Left ventricle myocardium superior (tissue), 1 donor: ENCODE measurements at regions of chr11 and their contacts with region 1.

Region 1: DNA sequence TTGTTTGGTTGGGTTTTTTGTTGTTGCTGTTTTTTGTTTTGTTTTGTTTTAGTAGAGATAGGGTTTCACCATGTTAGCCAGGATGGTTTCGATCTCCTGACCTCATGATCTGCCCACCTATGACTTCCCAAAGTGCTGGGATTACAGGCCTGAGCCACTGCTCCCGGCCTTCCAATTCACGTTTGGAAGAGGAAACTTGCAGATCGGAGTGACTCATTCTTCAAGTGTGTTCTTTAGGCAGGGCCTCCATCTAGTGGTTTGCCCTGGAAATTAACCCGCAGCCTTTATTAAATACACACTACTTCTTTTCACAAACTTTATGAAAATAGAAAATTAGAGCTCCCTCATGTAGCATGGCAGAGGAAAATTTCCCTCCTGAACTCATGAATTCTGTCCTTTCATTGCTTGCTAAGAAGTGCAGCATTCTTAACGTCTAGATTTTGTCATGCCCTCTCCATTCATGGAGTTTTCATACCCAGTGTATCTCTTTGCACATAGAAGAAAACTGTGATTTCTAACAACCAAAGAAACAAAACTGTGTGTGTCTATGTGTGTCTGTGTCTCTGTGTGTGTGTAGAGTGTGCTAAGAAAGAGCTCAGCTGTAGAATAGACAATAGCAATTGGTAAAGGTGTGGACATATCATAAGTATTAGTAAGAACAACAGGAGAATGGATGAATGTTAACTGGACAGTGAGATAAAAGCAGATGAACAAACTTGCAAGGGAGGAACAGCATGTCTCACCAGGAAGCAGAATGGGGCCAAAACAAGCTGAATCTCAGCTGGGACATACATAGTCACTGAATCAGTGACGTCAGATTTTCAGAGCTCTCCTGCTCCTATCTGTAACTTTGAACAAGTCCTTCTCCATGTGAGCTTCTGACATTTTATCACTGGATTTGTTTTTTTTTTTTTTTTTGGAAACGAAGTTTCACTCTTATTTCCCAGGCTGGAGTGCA is 118.4 kb downstream of the BBOX1 start:
- DNase-seq: no peak
- ATAC-seq: peak; percentile 86

Region 2: DNA sequence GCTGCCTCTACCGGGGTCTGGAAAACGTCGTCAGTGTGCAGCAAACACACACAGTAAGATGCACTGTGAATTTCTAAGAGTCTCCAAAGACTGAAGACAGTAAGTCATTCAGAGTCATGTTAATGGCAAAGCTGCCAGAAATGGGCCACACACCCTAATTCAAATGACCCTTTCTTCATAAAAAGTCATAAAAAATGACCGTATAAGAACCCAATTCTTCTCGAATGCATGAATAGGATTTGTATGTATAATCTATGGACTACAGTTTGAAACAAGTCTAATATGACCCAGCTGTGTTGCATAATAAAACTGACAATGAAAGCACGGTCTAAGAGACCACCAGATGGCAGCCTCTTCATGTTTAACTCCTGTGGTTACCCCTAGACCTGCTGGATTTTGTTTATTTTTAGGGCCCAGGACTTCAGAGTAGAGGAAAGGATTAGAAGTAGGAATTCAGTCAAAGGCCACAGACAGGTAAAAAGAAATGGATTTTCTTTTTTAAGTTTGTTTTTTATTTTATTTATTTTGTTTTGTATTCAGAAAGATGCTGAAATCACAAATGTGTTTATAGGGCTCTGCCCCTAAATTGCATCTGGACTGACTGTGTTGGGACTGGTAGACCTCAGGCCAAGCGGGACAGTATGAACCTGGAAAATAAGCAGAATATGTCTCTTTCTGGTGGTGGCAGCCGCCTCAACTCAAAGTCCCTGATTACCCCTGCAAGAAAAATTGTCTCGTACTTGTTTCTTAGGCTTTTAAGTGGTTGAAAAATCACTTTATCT is 405.1 kb before region 1 on chr11:
- intact Hi-C with region 1: loop called (anchors 5 kb)
- DNase-seq: peak; percentile 30
- ATAC-seq: peak; percentile 86

Region 3: DNA sequence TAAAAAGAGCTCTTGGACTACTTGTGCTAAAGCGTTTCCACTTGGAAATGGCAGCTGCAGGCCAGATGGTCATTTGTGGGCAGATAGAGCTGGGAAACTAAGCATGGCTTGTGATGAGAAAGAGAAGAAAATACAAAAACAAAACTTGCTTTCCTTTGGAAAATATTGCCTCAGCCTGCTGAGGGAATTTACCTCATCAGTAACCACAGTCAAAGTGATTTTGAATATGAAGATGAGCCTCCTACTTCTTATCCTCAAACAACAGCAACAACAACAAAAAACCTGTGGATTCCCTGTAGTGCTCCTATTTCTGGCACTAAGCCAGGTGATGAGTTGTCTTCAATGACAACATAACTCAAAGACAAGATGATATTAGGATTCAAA is 227.8 kb before region 1 on chr11:
- intact Hi-C with region 1: no loop called
- DNase-seq: peak; percentile 47
- ATAC-seq: peak; percentile 76